Mammary epithelial cell (primary cell): ENCODE measurements at regions of chr12 and their contacts with region 1.

Region 1: GRCh38 chr12:125895851-125896250 is 830.6 kb downstream of the AACS start:
- DNase-seq: no peak
- H3K4me3 ChIP-seq: no peak overlapping the region
- H3K27ac ChIP-seq: no peak overlapping the region
- H3K4me1 ChIP-seq: no peaks in the 10 kb centered on the region
- H3K27me3 ChIP-seq: no peaks in the 10 kb centered on the region
- CTCF ChIP-seq: no peak

Region 2: DNA sequence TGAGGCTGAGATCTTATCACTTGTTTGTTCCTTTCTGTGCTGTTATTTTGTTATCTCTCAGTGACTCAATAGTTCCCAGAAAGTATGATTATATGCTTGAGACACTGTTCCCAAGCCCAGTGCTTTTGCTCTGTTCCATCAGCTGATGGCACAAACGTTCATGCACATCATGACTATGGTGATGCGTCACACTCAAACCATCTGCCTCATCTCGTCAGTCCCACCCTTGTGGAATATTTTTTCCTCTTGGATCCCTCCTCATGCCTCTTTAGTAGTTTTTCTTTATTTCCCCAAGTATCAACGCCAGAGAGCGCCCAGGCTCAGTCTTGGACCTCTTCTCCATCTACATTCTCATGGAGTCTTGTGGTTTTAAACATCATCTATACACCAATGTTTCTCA is 43.7 kb before region 1 on chr12:
- CTCF ChIA-PET with region 1: no interaction called
- dilution Hi-C with region 1: loop called (anchors 5 kb)
- in situ Hi-C with region 1: no loop called
- intact Hi-C with region 1: no loop called
- DNase-seq: no peak
- H3K4me3 ChIP-seq: no peak overlapping the region
- H3K27ac ChIP-seq: no peak overlapping the region
- H3K4me1 ChIP-seq: no peaks in the 10 kb centered on the region
- H3K27me3 ChIP-seq: no peaks in the 10 kb centered on the region
- CTCF ChIP-seq: no peak

Region 3: GRCh38 chr12:126353604-126354003 is 457.8 kb after region 1 on chr12:
- CTCF ChIA-PET with region 1: no interaction called
- dilution Hi-C with region 1: no loop called
- in situ Hi-C with region 1: no loop called
- intact Hi-C with region 1: no loop called
- DNase-seq: peak; percentile 0
- H3K4me3 ChIP-seq: no peak overlapping the region
- H3K27ac ChIP-seq: no peak overlapping the region
- H3K4me1 ChIP-seq: no peaks in the 10 kb centered on the region
- H3K27me3 ChIP-seq: no peaks in the 10 kb centered on the region
- CTCF ChIP-seq: no peak